K562 (cell line): ENCODE measurements at regions of chr11 and their contacts with region 1.

Region 1: GRCh38 chr11:56163804-56164203 is 3.7 kb upstream of the OR8K5 start:
- DNase-seq: no peak
- ATAC-seq: no peak
- H3K4me3 ChIP-seq: no peak overlapping the region
- H3K27ac ChIP-seq: no peak overlapping the region
- H3K4me1 ChIP-seq: no peaks in the 10 kb centered on the region
- H3K27me3 ChIP-seq: no peaks in the 10 kb centered on the region
- CTCF ChIP-seq: no peak
- EP300 ChIP-seq: no peak
- POLR2A ChIP-seq: no peak
- RAD21 ChIP-seq: no peak

Region 2: DNA sequence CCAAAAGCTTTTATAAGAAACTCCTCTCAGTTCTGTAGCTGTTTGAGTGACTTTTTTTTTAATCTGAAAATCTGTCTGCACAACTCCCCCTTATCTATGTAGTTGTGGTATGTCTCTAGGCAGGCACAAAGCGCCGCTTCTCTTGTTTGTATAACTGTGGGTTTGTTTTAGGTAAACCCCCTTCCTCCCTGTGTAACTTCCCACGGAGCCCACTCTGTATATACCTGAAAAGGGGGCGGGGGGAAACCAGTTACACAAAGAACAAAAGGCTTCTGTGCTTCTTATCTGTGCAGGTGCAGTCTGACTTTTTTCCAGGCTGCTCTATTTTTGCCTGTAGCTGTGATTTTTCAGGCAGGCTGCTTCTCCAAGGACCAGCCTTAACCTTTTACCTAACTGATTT is 207.3 kb before region 1 on chr11:
- CTCF ChIA-PET with region 1: no interaction called
- POLR2A ChIA-PET with region 1: no interaction called
- in situ Hi-C with region 1: no loop called
- intact Hi-C with region 1: no loop called
- DNase-seq: no peak
- ATAC-seq: no peak
- H3K4me3 ChIP-seq: no peak overlapping the region
- H3K27ac ChIP-seq: no peak overlapping the region
- H3K4me1 ChIP-seq: no peaks in the 10 kb centered on the region
- H3K27me3 ChIP-seq: no peaks in the 10 kb centered on the region
- CTCF ChIP-seq: no peak
- EP300 ChIP-seq: no peak
- POLR2A ChIP-seq: no peak
- RAD21 ChIP-seq: no peak

Region 3: DNA sequence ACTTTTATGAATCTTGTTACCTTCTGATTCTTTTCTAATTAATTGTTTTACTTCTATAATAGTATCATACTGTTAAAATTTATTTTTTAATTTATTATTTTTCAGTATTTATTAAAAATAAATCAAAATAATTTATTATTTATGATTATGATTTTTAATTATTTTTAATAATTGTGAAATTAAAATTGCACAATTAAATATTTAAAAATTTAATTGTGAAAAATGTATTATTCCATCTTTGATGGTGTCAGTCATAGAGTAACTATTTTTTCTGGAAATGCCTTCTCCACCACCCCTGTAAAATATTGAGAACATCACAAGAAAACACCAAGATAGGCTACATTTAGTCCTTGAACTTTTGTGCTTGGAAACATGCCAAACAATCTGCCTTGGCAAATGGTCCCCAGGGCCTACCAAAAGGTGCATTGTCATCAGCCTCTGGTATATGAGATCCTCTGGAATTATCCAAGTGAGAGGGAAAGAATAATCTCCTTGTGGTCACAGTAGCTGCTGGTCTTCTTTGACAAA is 60.5 kb before region 1 on chr11 and contains the start of gene OR8H2:
- CTCF ChIA-PET with region 1: no interaction called
- POLR2A ChIA-PET with region 1: no interaction called
- in situ Hi-C with region 1: no loop called
- intact Hi-C with region 1: loop called (anchors 10 kb)
- DNase-seq: no peak
- ATAC-seq: no peak
- H3K4me3 ChIP-seq: no peak within 1 kb of the TSS
- H3K27ac ChIP-seq: no peak within 1 kb of the TSS
- H3K4me1 ChIP-seq: no peaks in the 10 kb centered on the region
- H3K27me3 ChIP-seq: no peaks in the 10 kb centered on the region
- CTCF ChIP-seq: no peak
- EP300 ChIP-seq: no peak
- POLR2A ChIP-seq: no peak
- RAD21 ChIP-seq: no peak
- polyA plus RNA-seq, gene OR8H2: not detected